Lower leg skin (tissue), 4 donors: ENCODE measurements at regions of chr17 and their contacts with region 1.

Region 1: GRCh38 chr17:80605326-80606066 is 60.9 kb downstream of the RPTOR start:
- DNase-seq: peak in 1 of 2 donors; percentile 42
- H3K4me3 ChIP-seq: no peak overlapping the region
- CTCF ChIP-seq: no peak
- POLR2A ChIP-seq: no peak

Region 2: GRCh38 chr17:78665952-78666920 is 1939.3 kb before region 1 on chr17:
- intact Hi-C with region 1: loop called (anchors 10 kb)
- DNase-seq: no peak
- H3K4me3 ChIP-seq: no peak overlapping the region
- CTCF ChIP-seq: no peak
- POLR2A ChIP-seq: no peak